GM18951 (cell line): ENCODE measurements at regions of chr4 and their contacts with region 1.

Region 1: GRCh38 chr4:7987148-7987989 is 47.7 kb upstream of the AFAP1 start:
- POLR2A ChIP-seq: no peak

Region 2: GRCh38 chr4:7802093-7802726 is 185.2 kb before region 1 on chr4:
- in situ Hi-C with region 1: loop called (anchors 10 kb)
- POLR2A ChIP-seq: no peak

Region 3: DNA sequence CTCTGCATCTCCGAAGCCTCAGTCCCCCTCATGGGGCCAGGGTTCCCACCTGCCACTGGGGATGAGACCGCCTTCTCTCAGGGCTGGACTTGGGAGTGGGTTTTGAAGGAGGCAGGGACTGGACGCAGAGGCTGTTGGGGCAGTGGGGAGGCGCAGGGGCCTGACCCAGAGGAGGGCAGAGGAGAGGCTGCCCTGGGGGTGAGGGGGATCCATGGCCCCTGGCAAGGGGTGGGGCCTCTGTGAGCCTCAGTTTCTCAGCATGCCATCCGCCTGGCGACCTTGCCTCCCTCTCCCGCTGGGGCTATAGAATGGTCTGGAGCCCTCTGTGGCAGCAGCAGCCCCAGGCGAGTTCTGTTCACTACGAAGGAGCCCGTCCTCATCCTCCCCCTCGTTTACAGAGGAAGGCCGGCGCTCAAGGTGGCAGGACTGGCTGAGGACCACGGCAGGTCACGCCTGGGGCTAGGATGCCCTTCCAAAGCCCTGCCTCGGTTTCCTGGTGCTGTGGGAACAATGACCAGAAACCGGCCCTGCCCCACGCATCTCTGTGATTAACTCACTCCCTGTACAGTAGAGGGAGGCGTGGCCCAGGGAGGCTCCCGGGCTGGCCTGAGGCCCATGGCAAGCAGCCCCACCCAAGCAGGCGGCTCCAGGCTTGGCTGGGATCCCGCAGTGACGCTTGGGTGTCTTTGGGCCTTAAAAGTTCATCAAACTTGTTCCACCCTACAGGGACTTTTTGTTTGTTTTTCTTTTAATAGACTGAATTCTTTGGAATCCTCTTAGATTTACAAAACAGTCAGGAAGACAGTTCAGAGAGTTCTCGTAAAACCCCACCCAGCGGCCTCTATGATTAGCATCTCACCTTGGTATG is 195.7 kb after region 1 on chr4:
- in situ Hi-C with region 1: no loop called
- POLR2A ChIP-seq: no peak